Lower leg skin (tissue), 4 donors: ENCODE measurements at regions of chr1 and their contacts with region 1.

Region 1: DNA sequence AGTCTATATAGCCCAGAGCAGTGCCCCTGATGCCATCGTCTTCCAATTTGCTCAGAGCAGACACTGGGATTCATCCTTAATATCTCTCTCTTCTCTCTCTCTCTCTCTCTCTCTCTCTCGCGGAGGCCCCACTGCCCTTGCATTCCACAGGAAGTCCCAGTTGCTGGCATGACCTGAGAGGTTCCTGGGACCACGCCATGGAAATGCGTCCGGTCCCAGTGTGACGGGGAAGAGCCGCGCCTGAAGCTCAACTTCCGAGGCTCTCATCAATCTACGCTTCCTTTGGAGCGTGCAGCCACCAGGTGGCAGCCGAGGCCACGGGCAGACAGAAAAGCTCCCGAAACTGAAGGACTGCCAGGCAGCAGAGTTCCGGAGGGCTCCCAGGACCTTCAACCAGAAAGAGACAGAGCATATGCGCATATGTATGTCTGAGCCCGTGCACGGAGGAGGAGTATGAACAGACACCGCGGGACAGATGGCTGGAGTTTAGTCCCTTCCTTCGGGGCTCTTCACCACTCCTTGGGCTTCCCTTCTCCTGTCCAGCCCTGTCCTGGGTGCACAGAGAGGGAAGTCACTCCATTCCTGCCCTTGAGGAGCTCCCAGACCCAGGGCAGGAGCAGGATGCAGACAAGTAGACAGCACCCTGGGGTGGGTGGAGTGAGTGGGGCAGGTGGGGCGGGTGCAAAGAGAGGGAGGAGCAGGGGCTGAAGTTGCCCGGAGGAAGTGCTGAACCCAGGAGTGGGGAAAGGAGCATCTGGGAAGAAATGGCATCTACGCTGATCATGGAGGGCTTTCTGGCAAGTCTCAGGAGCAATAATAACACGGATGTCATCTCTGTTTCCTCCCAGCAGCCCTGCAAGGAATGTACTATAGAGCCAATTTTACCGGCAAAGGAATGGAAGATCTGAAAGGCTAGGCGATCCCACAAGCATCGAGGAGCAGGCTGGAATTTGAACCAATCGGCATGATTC is 10.5 kb downstream of the PDZK1IP1 start:
- DNase-seq: peak; percentile 81 to 97
- H3K4me3 ChIP-seq: peak overlapping the region; percentile 17
- CTCF ChIP-seq: peak in 1 of 3 donors; percentile 88
- POLR2A ChIP-seq: no peak

Region 2: DNA sequence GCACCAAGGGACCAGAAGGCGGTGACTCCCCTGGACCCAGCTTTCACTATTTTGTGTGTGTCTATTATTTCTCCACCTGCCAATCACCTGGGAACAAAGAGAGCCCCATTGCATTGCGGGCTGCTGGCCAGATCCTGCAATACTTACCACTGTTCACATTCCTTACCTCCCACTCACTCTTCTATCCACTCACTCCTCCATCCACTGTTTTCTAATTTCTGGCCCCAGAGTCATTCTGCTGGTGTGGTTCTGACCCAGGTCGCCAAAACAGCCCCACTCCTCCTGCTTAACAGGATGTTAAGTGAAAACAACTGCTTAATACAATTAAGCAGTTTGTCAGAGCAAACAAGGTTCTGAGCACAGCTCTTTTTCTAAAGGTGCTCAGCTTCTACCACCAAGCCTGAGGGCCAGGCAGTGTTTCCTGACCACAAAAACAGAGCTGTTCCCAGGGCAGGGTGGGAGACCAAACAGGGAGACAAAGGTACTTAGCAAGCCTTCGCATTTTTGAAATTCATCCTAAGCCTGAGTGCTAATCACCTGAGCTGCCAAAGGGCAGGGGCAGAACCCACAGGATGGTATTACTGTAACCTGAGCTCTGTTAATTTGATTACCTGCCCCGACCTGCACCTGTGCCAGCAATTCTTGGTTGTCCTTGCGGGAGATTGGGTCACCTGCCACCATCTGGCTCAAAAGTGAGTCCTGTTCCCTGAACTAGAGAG is 421.9 kb before region 1 on chr1:
- intact Hi-C with region 1: loop called (anchors 10 kb)
- DNase-seq: no peak
- H3K4me3 ChIP-seq: no peak overlapping the region
- CTCF ChIP-seq: no peak
- POLR2A ChIP-seq: no peak

Region 3: GRCh38 chr1:47432071-47433036 is 253.1 kb after region 1 on chr1:
- intact Hi-C with region 1: loop called (anchors 5 kb)
- DNase-seq: peak; percentile 80 to 96
- H3K4me3 ChIP-seq: no peak overlapping the region
- CTCF ChIP-seq: peak in 1 of 3 donors; percentile 78
- POLR2A ChIP-seq: no peak

Region 4: GRCh38 chr1:47725992-47726855 is 546.9 kb after region 1 on chr1:
- intact Hi-C with region 1: loop called (anchors 5 kb)
- DNase-seq: peak; percentile 72 to 92
- H3K4me3 ChIP-seq: no peak overlapping the region
- CTCF ChIP-seq: no peak
- POLR2A ChIP-seq: no peak